ENCODE measurements at regions of chr17 and their contacts with region 1.

Region 1: GRCh38 chr17:78360371-78361224 is 721 bp upstream of the SOCS3 start:
- DNase-seq: peak; percentile 88 to 96 (median 95)
- H3K4me3 ChIP-seq: peak overlapping the region; percentile 83
- H3K27ac ChIP-seq: peak overlapping the region; percentile 71 to 92
- H3K4me1 ChIP-seq: peaks cover 24% of the 10 kb centered on the region
- H3K27me3 ChIP-seq: no peaks in the 10 kb centered on the region
- CTCF ChIP-seq: peak; percentile 86 to 95 (median 89)
- EP300 ChIP-seq: no peak
- POLR2A ChIP-seq: no peak

Region 2: DNA sequence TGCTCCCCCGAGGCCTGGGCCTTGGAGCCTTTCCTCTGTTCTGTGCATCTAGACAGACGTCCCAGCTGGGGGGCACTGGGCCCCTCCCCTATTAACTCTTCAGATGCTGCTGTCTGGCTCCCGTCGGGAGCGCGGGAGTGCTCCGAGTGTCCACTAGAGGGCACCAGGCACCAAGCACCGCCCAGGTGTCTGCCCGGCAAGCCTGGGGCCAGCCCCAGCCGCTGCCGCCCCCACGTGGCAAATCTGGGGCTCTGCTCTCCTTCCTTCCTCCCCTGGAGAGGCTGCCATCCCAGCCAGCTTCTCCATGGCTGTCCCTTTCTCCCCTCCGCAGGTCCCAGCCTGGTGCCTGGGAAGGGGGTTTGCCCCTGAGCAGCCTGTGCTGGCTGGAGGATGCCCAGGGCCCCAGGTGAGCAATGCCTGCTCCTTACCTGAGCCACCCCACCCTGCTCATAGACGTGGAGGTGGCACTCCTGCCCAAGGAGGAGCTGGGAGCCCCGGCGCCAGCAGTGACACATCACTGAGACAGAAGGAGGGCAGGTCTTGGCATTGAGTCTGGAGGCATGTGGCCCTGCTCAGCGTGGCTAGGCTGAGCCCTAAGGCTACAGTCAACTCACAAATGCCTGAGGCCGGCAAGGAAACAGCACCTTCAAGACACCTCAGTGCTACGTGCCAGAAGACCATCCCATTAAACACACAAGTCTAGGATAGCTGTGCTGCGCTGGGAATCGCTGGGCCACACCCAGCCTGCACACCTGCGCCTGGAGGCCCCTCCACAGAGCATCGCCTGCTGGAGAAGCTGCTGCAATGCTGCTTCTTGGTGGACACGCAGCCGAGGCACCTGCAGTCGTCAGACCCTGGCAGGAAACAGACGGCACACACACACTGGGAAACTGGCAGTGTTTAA is 109.5 kb before region 1 on chr17:
- intact Hi-C with region 1: loop called in 1 of 4 experiments (anchors 10 kb)
- DNase-seq: peak; percentile 80 to 91 (median 88)
- H3K4me3 ChIP-seq: no peak overlapping the region
- H3K27ac ChIP-seq: no peak overlapping the region
- H3K4me1 ChIP-seq: peaks cover 3% of the 10 kb centered on the region
- H3K27me3 ChIP-seq: no peaks in the 10 kb centered on the region
- CTCF ChIP-seq: peak; percentile 96 to 100 (median 96)
- EP300 ChIP-seq: no peak
- POLR2A ChIP-seq: no peak

Region 3: DNA sequence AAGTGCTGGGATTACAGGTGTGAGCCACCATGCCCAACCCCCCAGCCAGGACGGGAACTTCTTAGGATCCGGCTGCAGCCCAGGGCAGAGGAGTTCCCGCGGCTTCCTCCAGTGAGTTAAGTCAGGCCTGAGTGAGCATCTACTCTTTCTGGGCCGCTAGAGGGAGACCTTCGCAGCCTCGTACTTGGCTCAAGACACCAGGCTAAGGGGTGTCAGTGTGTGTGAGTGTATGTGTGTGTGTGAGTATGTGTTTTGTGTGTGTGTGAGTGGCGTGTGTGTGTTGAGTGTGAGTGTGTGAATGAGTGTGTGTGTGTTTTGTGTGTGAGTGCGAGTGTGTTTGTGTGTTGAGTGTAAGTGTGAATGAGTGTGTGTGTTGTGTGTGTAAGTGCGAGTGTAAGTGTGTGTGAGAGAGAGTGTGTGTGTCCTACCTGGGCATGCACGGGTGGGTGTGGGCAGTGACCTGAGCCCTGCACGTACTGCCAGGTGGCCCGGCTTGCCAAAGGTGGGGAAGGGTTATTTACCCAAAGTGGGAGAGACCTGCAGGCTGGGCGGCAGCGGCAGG is 70.7 kb before region 1 on chr17:
- intact Hi-C with region 1: loop called in 2 of 4 experiments (anchors 5 kb)
- DNase-seq: peak; percentile 70 to 83 (median 80)
- H3K4me3 ChIP-seq: no peak overlapping the region
- H3K27ac ChIP-seq: no peak overlapping the region
- H3K4me1 ChIP-seq: no peaks in the 10 kb centered on the region
- H3K27me3 ChIP-seq: no peaks in the 10 kb centered on the region
- CTCF ChIP-seq: peak; percentile 67 to 85 (median 79)
- EP300 ChIP-seq: no peak
- POLR2A ChIP-seq: no peak

Region 4: GRCh38 chr17:78324391-78325075 is 36.1 kb before region 1 on chr17:
- intact Hi-C with region 1: loop called in 1 of 4 experiments (anchors 1 kb)
- DNase-seq: peak; percentile 80 to 89 (median 85)
- H3K4me3 ChIP-seq: peak overlapping the region; percentile 1
- H3K27ac ChIP-seq: peak overlapping the region; percentile 23 to 80
- H3K4me1 ChIP-seq: peaks cover 7% of the 10 kb centered on the region
- H3K27me3 ChIP-seq: no peaks in the 10 kb centered on the region
- CTCF ChIP-seq: no peak
- EP300 ChIP-seq: peak; percentile 9
- POLR2A ChIP-seq: peak; percentile 46